ENCODE measurements at regions of chr12 and their contacts with region 1.

Region 1: DNA sequence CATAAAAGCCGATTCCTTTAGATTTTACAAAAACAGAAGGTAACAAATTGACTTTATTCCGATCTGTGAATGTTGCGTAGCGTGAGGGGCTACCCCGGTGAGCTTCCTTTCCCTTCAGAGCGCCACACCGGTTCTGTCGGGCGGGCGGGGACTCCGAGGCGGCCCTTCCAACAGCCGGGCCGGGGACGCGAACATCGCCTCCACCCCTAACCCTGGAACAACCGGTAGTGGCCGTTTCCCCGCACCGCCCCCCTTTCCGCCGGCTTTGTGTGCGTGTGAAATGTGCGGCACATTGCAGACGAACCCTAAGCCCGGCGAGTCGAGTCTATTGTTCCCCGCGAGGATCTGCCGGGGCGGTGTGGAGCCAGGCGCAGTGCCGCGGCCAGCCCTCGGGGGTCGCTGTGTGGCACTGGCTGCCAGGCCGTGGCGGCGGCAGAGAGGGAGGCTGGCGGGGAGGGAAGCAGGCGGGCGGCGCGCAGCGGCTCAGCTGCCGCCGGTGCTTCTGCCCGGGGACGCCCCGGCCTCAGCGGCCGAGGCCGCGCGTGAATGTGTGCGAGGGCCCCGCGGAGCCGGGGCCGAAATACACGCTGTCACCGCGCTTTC is 775 bp upstream of the ARID2 start:
- DNase-seq: peak; percentile 91
- H3K4me3 ChIP-seq: peak overlapping the region; percentile 88
- H3K27ac ChIP-seq: peak overlapping the region; percentile 86
- H3K27me3 ChIP-seq: no peaks in the 10 kb centered on the region
- CTCF ChIP-seq: peak; percentile 81

Region 2: DNA sequence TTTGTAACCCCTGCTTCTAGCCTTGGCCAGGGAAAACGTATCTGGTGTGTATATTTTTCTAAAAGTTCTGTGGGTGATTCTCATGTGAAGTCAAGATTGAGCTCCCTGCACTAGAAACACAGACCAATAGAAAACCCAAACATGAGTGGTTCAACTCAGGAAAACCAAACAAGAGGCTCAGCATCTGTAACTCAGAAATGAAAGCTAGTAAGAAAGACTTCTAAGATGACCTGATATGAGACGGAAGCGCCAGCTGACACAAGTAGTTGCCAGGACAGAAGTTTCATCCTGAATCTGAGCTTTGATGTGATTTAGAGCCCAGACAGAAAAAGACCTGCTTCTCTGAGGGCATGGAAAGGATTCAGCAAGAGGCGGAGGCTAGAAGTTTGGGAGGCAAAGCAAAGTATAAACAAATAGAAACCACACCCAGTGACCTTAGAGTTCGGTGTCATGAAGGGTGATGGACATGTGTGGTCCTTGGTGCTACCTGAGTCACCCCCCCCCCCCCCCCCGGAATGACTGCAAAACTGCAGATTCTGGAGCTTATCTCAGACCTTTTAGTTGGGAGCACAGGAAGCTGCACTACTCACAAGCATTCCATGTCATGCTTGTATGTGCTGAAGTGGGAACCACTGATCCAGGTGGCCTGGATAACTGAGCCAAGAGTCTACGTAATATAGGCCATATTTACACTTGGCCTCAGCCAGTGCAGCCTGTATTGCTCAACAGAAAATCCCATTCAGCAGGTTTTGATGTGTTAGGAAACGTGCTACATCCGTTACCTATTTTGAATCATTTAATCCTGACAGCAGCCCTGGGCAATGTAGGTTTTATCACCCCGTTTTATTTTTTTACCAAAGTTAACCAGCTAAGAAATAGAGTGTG is 321.5 kb before region 1 on chr12:
- CTCF ChIA-PET with region 1: interaction called, 11 read pairs
- POLR2A ChIA-PET with region 1: no interaction called
- DNase-seq: peak; percentile 49
- H3K4me3 ChIP-seq: no peak overlapping the region
- H3K27ac ChIP-seq: peak overlapping the region; percentile 71
- H3K27me3 ChIP-seq: no peaks in the 10 kb centered on the region
- CTCF ChIP-seq: no peak

Region 3: GRCh38 chr12:45745861-45746277 is 17.1 kb after region 1 on chr12:
- CTCF ChIA-PET with region 1: interaction called, 10 read pairs
- POLR2A ChIA-PET with region 1: interaction called, 3 read pairs
- DNase-seq: no peak
- H3K4me3 ChIP-seq: no peak overlapping the region
- H3K27ac ChIP-seq: no peak overlapping the region
- H3K27me3 ChIP-seq: no peaks in the 10 kb centered on the region
- CTCF ChIP-seq: peak; percentile 32

Measured in AG04450 (cell line).